Left cardiac atrium (tissue), 4 donors: ENCODE measurements at regions of chr21 and their contacts with region 1.

Region 1: GRCh38 chr21:44510508-44511210 is 29.3 kb downstream of the KRTAP10-1 start:
- DNase-seq: peak; percentile 54
- ATAC-seq: peak; percentile 59 to 66

Region 2: GRCh38 chr21:44263221-44264167 is 247.2 kb before region 1 on chr21:
- intact Hi-C with region 1: no loop called
- DNase-seq: peak; percentile 18
- ATAC-seq: no peak

Region 3: GRCh38 chr21:44742418-44743153 is 231.9 kb after region 1 on chr21:
- intact Hi-C with region 1: loop called in 1 of 2 experiments (anchors 5 kb)
- DNase-seq: no peak
- ATAC-seq: no peak

Region 4: GRCh38 chr21:44792702-44793591 is 282.3 kb after region 1 on chr21:
- intact Hi-C with region 1: loop called in 1 of 2 experiments (anchors 2 kb)
- DNase-seq: peak; percentile 51
- ATAC-seq: peak; percentile 87 to 92

Region 5: GRCh38 chr21:45709173-45709572 is 1198.5 kb after region 1 on chr21:
- intact Hi-C with region 1: no loop called
- DNase-seq: no peak
- ATAC-seq: no peak